ENCODE measurements at regions of chr5 and their contacts with region 1.

Region 1: DNA sequence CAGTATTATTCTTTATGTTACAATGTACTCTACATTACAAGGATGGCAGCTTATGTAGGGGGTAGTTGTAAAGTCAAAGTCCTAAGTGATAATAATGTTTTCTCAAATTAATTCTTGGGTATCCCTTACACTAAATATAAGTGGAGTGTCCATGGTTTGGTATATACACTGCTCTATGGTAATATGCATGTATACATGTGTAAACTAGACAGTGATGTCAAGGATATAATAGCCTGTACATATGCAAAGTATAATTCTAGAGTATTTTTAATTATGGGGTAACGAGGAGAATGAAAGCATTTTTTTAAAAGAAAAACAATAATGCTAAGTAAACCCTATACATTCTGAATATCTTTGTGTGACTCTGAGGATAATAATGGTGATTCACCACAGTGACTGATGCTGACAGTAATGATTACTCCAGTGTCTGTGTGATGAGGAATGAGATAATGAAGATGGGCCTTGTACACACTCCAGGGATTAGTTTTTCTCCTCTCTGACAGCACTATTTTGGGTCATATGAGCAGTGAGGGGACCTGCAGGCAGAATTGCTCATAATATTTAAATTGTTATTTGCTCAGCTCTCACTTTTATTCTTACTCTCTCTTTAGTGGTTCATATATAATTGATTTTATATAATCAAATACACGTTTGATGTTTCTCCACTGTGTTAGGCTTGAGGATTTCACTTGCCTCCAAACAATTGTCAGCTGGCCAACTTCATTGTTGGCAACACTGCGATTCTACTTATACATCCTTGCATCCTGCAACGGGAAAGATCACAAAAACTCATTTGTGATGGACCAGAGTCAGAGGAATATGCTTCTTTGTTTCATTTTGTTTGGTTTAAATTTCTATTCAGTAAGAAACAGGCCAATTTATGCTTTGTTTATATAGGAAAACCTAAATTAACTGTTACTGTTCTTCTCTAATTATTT is 88.2 kb downstream of the NREP start:
- DNase-seq: no peak
- H3K4me3 Mint-ChIP-seq: no peak overlapping the region
- H3K27ac Mint-ChIP-seq: no peak overlapping the region
- H3K4me1 Mint-ChIP-seq: no peaks in the 10 kb centered on the region
- H3K27me3 Mint-ChIP-seq: peaks cover 4% of the 10 kb centered on the region

Region 2: GRCh38 chr5:111856876-111857466 is 188.2 kb after region 1 on chr5:
- CTCF ChIA-PET with region 1: interaction called, 10 read pairs
- POLR2A ChIA-PET with region 1: no interaction called
- DNase-seq: no peak
- H3K4me3 Mint-ChIP-seq: no peak overlapping the region
- H3K27ac Mint-ChIP-seq: no peak overlapping the region
- H3K4me1 Mint-ChIP-seq: no peaks in the 10 kb centered on the region
- H3K27me3 Mint-ChIP-seq: no peaks in the 10 kb centered on the region

Measured in activated CD4-positive, alpha-beta memory T cell treated with anti-CD3 and anti-CD28 coated beads, Interleukin-2, amount 10 ng/mL, durations not matched to agents 7 days and 5 days (primary cell).